Heart left ventricle (tissue), 16 donors: ENCODE measurements at regions of chr1 and their contacts with region 1.

Region 1: DNA sequence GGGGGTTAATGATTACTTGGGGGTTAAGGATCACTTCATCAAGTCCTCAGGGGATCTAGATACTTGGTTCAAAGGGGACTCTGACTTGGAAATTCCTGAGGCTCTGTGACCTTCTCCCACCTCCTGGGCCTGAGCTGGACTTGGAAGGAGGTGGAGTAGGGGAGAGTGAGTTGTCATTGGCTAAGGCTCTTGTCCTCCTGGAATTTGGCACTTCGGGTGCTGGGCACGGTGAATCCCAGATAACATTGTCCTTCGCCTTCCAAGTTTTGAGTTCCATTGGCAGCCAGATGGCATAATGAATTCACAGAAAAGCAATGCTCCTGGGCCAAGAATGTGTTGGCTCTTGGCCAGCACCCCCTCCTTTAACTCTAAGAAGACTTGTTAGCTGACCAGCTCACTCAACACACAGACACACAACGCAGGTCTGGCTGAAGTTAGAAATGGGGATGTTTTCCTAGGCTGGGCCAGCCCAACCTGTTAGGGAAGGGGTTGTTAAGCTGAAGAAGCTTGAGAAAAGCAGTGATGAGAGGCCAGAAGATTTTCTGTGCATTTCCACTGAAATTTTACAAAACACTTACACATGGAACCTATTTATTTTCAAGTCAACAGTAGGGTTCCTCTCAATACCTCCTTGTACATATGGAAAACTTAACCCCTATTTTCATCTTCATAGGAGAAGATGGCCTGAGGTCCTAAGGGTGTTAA is 29.7 kb downstream of the SLC26A9 start:
- DNase-seq: peak; percentile 69 to 91 (median 80)
- ATAC-seq: peak; percentile 49 to 80 (median 62)
- H3K4me3 ChIP-seq: no peak overlapping the region
- H3K27ac ChIP-seq: peak overlapping the region; percentile 68 to 94 (median 86)
- H3K4me1 ChIP-seq: peaks cover 3 to 60% (median 31%) of the 10 kb centered on the region in 12 donors
- H3K27me3 ChIP-seq: no peaks in the 10 kb centered on the region
- CTCF ChIP-seq: no peak
- POLR2A ChIP-seq: no peak

Region 2: DNA sequence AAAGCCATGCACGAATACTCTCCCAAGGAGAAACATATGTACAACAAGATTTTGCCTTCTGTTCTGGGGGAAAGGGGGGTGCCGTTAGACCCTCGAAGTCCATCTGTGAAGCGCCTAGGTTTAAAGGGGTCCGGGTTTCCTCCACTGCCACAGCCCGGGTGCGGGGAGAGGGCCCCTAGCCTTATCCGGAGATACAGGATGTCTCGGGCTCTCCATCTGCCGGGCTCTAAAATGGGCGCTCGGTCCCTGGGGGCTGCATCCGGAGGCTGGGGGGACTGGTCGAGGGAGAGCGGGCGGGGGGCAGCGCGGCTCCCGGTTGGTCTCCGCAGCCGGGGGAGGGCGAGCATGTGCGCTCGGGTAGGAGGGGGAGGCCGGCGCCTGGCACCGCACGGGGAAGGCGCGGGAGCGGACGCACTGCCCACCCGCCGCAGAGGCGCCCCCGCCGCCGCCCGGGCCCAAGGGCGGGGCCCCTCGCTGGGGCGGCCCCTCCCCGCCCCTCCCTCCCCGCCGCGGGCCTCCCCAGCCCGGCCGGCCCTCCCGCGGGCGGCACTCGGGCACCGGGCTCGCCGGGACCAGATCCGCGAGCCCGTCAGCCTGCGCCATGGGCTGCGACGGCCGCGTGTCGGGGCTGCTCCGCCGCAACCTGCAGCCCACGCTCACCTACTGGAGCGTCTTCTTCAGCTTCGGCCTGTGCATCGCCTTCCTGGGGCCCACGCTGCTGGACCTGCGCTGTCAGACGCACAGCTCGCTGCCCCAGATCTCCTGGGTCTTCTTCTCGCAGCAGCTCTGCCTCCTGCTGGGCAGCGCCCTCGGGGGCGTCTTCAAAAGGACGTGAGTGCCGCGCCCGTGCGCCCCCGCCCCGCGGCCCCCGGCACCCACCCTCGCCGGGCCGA is 344.9 kb before region 1 on chr1:
- intact Hi-C with region 1: no loop called
- DNase-seq: peak in 1 of 5 donors; percentile 24
- ATAC-seq: peak in 3 of 4 donors; percentile 23 to 30 (median 27)
- H3K4me3 ChIP-seq: peak overlapping the region in 11 of 12 donors; percentile 22 to 62 (median 47)
- H3K27ac ChIP-seq: peak overlapping the region in 2 of 12 donors; percentile 31 to 34
- H3K4me1 ChIP-seq: peaks cover 0 to 17% (median 0%) of the 10 kb centered on the region in 12 donors
- H3K27me3 ChIP-seq: peaks cover 4 to 38% (median 15%) of the 10 kb centered on the region in 9 donors
- CTCF ChIP-seq: peak in 6 of 12 donors; percentile 16 to 37 (median 29)
- POLR2A ChIP-seq: no peak

Region 3: GRCh38 chr1:205791568-205792180 is 121.9 kb before region 1 on chr1:
- intact Hi-C with region 1: loop called (anchors 2 to 5 kb)
- DNase-seq: peak in 3 of 5 donors; percentile 60 to 69 (median 61)
- ATAC-seq: peak; percentile 55 to 71 (median 62)
- H3K4me3 ChIP-seq: no peak overlapping the region
- H3K27ac ChIP-seq: peak overlapping the region in 4 of 12 donors; percentile 1 to 25 (median 10)
- H3K4me1 ChIP-seq: peaks cover 0 to 23% (median 1%) of the 10 kb centered on the region in 12 donors
- H3K27me3 ChIP-seq: no peaks in the 10 kb centered on the region
- CTCF ChIP-seq: peak; percentile 49 to 82 (median 74)
- POLR2A ChIP-seq: no peak

Region 4: GRCh38 chr1:205983925-205984725 is 70.5 kb after region 1 on chr1:
- intact Hi-C with region 1: no loop called
- DNase-seq: peak; percentile 72 to 83 (median 75)
- ATAC-seq: peak; percentile 53 to 86 (median 84)
- H3K4me3 ChIP-seq: no peak overlapping the region
- H3K27ac ChIP-seq: no peak overlapping the region
- H3K4me1 ChIP-seq: peaks cover 0 to 40% (median 17%) of the 10 kb centered on the region in 12 donors
- H3K27me3 ChIP-seq: no peaks in the 10 kb centered on the region
- CTCF ChIP-seq: peak; percentile 56 to 85 (median 76)
- POLR2A ChIP-seq: no peak

Region 5: DNA sequence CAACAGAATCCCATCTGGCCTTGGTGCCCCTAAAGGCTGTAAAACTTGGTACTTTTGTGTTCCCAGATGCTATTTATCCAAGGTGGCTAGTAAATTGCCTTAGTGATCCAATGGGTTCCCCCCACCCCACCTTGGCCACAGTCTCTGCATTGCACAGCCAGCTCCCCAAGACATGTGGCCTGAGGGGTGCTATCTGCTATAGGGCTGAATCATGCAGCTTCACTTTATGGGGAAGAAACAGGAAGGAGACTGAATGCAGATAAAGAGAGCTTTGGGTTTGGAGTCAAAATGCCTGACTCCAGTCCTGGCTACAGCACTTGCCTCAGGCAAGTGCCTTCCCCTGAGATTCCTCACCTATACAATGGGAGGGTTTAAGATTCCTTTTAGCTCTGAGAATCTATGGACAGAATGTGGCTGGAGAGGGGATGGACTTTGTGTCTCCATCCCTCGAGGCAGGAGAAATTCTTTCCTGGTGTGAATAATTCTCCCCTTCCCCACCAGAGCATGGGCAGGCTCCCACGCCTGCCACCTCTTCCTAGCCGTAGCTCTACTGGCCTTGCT is 145.8 kb after region 1 on chr1:
- intact Hi-C with region 1: no loop called
- DNase-seq: no peak
- ATAC-seq: no peak
- H3K4me3 ChIP-seq: no peak overlapping the region
- H3K27ac ChIP-seq: no peak overlapping the region
- H3K4me1 ChIP-seq: no peaks in the 10 kb centered on the region
- H3K27me3 ChIP-seq: no peaks in the 10 kb centered on the region
- CTCF ChIP-seq: no peak
- POLR2A ChIP-seq: no peak